ENCODE measurements at regions of chr13 and their contacts with region 1.

Region 1: GRCh38 chr13:114148521-114148855 is 16.1 kb upstream of the RASA3 start:
- DNase-seq: peak; percentile 86
- H3K4me3 Mint-ChIP-seq: peak overlapping the region; percentile 49
- H3K27ac Mint-ChIP-seq: peak overlapping the region; percentile 78
- H3K4me1 Mint-ChIP-seq: peaks cover 68% of the 10 kb centered on the region
- H3K27me3 Mint-ChIP-seq: peaks cover 7% of the 10 kb centered on the region

Region 2: GRCh38 chr13:114004420-114005205 is 143.9 kb before region 1 on chr13:
- intact Hi-C with region 1: no loop called
- DNase-seq: no peak
- H3K4me3 Mint-ChIP-seq: no peak overlapping the region
- H3K27ac Mint-ChIP-seq: no peak overlapping the region
- H3K4me1 Mint-ChIP-seq: no peaks in the 10 kb centered on the region
- H3K27me3 Mint-ChIP-seq: no peaks in the 10 kb centered on the region

Region 3: DNA sequence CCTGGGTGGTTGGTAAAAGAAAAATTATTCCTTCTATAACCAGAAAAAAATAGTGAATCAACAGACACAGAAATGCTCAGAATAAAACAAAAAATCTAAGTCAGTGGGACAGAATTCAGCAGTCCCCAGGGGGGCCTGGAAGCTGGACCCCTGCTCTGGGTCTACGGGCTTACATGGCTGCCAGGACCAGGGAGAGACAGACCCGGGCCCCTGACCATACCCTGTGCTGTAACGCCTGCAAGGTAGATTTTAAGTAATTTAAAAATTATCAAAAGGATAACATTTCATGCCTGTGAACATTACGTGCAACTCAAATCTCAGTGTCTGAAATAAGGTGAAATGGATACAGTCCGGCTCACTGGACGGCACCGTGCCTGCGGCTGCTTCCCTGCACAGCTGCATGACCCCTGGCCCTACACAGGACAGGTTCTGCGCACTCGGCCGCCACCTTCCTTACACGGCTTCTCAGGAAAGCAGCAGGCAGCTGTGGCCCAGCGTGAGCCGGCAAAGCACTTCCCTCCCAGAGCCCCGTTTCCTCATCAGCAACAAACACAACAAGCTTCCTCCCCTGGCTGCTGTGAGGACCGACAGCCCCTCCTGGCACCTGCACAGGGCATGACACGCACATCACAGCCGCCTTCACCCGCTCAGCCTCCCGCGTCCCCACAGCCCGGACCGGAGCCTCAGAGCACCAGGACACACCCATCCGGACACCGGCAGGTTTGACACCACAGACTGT is 38.2 kb before region 1 on chr13:
- intact Hi-C with region 1: loop called (anchors 5 kb)
- DNase-seq: peak; percentile 70
- H3K4me3 Mint-ChIP-seq: peak overlapping the region; percentile 54
- H3K27ac Mint-ChIP-seq: peak overlapping the region; percentile 68
- H3K4me1 Mint-ChIP-seq: peaks cover 33% of the 10 kb centered on the region
- H3K27me3 Mint-ChIP-seq: no peaks in the 10 kb centered on the region

Region 4: DNA sequence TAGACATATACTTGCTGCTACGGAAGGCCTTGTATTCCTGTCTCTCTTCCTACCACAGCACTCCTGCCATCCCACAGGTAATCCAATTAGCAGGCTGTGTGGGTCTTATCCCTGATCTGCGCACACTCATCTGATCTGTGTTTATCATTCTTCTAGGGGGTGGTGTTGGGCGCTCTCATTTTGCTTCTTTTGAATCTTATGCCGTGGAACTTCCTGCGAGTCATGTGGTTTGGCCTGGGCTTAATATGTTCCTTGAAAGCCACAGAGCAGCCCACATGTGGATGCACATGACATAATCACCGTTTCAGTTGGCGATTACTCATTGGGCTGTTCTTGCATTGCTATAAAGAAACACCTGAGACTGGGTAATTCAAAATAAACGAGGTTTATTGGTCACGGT is 23.6 kb before region 1 on chr13:
- intact Hi-C with region 1: loop called (anchors 1 kb)
- DNase-seq: peak; percentile 48
- H3K4me3 Mint-ChIP-seq: no peak overlapping the region
- H3K27ac Mint-ChIP-seq: peak overlapping the region; percentile 62
- H3K4me1 Mint-ChIP-seq: peaks cover 48% of the 10 kb centered on the region
- H3K27me3 Mint-ChIP-seq: peaks cover 3% of the 10 kb centered on the region

Region 5: DNA sequence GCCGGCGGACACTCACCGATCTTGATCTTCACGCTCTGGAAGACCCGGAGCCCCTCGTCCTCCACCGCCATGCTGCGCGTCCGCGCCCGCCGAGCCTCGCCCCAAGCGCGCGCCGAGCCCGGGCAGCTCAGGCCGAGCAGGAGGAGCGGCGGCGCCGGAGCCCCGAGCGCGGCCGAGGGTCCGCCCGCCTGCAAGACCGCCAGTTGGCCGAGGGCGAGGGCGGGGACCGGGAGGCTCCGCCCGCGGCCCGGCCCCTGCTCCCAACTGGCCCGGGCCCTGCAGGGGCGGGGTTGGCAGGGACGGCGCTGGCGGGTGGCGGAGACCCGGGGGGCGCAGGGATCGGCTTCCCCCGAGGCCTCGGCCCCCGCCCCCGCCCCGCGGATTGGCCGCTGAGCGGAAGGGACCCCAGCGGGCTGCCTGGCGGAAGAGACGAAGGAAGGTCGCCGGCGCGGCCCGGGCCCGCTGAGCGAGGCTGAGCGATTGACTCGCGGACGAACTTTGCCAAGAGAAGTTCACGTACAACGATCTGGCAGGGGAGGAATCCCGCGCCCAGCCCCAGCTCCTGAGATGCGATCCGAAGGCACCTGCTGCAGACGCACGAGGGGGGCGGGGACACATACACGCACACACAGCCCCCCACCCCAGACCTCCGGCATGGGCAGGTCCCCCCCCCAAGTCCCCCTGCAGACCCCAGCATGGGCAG is 15.9 kb before region 1 on chr13 and contains the start of gene RASA3:
- intact Hi-C with region 1: loop called (anchors 1 kb)
- DNase-seq: peak; percentile 55
- H3K4me3 Mint-ChIP-seq: peak within 1 kb of the TSS; percentile 93
- H3K27ac Mint-ChIP-seq: peak within 1 kb of the TSS; percentile 87
- H3K4me1 Mint-ChIP-seq: peaks cover 34% of the 10 kb centered on the region
- H3K27me3 Mint-ChIP-seq: peaks cover 13% of the 10 kb centered on the region
- total RNA-seq, gene RASA3: 13.7 and 13.9 TPM in 2 replicates

Region 6: GRCh38 chr13:114226699-114227323 is 78.3 kb after region 1 on chr13:
- intact Hi-C with region 1: loop called (anchors 5 kb)
- DNase-seq: peak; percentile 75
- H3K4me3 Mint-ChIP-seq: no peak overlapping the region
- H3K27ac Mint-ChIP-seq: no peak overlapping the region
- H3K4me1 Mint-ChIP-seq: peaks cover 14% of the 10 kb centered on the region
- H3K27me3 Mint-ChIP-seq: peaks cover 27% of the 10 kb centered on the region

Region 7: DNA sequence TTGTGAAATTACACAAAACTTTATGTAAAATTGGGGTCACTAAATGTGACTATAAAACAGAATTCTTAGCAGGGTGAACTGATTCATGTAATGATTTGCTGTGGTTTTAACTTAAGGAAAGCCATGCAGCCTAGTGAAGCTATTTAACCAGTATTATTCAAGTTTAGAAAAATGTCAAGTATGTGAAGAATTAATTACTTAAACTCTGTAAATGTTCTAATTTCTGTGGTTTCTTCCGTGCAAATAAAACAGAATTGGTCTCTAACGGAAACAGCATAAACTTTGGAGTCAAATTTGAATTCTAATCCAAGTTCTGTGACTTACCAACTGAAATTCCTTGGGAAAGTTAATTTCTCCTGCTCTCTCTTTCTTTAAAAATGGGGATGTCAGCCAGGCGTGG is 99.5 kb after region 1 on chr13:
- intact Hi-C with region 1: no loop called
- DNase-seq: no peak
- H3K4me3 Mint-ChIP-seq: no peak overlapping the region
- H3K27ac Mint-ChIP-seq: no peak overlapping the region
- H3K4me1 Mint-ChIP-seq: no peaks in the 10 kb centered on the region
- H3K27me3 Mint-ChIP-seq: no peaks in the 10 kb centered on the region

Measured in activated T-helper 2 cell treated with anti-CD3 and anti-CD28 coated beads, Interferon-gamma antibody, Interleukin-2, Interleukin-4, amounts not matched to agents 10 μg/mL and 5 μg/mL and 100 μg/mL, durations not matched to agents 14 hours and 24 hours and 36 hours (primary cell).